ENCODE measurements at regions of chr6 and their contacts with region 1.

Region 1: DNA sequence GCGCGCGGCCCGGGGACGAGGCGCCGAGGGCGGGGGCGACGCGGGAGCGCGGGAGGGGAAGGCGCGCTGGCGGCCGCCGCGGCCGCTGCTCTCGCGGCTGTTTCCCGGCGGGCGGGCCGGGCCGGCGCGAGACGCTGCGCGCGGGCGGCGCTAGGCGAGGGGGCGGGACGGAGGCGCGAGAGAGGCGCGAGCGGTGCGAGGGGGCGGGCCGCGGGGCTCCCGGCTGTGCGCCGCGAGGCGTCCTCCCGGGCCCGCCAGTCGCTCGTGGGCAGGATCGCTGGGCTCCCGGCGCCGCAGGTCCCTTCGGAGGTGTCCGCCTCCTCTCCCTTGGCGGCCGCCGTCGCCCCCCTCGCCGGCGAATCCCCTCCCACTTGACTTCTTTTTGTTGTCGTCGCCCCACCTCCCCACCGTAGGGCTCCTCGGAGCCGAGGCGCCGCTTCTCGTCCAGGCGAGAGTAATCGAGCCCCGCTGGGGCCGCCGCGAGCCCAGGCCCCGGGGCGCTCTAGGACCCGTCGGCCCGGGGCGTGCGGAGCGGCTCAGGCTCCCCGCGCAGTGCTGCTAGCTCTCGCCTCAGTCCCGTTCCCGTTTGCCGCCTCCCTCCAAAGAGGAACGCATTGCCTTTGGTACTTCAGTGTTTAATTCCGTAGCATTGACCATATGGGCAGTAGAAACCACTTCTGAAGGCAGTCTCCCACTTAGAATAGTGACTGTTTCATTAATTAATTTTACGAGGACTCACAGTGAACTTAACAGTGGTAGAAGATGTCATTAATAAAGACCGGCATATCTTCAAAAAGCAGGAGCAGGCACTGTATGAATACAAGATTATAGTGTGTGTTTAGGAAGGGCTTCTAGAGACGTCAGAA is at the start of gene RANBP9:
- DNase-seq: peak; percentile 95
- H3K4me3 ChIP-seq: peak within 1 kb of the TSS; percentile 74
- H3K27ac ChIP-seq: peak within 1 kb of the TSS; percentile 78
- H3K4me1 ChIP-seq: peaks cover 20% of the 10 kb centered on the region
- CTCF ChIP-seq: no peak
- total RNA-seq, gene RANBP9: 20.5 and 22.2 TPM in 2 replicates

Region 2: DNA sequence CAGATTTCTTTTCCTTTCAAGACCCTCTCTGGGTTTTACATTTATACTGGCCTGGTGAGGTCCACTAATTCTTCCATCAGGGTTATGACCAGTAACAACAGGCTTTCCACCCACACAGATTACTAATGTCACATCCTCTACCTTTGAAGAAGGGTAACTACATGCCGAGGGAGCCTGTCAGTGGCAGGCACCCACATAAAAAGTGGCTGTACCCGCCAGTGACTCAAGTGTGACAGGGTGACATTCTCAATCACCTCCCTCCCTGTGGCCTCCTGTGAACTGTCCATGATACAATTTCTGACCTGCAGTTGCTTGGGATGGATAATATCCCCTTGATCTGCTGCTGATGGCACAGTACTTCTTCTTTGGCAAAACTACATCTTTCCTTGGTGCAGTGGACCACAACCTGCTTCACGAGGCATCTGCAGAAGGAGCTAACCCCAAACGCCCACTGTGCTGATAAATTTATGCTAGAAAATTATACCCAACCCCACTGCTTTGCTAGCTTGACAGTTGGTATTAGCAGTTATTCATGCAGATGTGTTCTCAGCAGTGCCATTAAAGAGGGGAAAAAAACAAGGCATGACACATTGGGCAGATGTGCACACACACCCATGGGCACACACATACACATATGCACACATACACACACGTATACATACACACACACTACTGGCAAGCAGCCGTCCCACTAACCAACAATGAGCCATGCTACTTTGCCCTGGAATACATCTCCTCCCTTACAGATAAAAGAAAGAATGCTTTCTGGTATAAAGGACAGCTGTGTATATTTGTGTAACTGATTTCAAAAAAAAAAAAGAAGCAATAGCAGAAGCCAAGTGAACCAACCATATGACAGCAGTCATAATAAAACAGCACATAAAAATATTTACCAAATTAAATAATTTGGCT is 245.4 kb before region 1 on chr6:
- CTCF ChIA-PET with region 1: no interaction called
- POLR2A ChIA-PET with region 1: no interaction called
- intact Hi-C with region 1: loop called (anchors 5 kb)
- DNase-seq: no peak
- H3K4me3 ChIP-seq: peak overlapping the region; percentile 2
- H3K27ac ChIP-seq: no peak overlapping the region
- H3K4me1 ChIP-seq: peaks cover 79% of the 10 kb centered on the region
- CTCF ChIP-seq: no peak

Region 3: DNA sequence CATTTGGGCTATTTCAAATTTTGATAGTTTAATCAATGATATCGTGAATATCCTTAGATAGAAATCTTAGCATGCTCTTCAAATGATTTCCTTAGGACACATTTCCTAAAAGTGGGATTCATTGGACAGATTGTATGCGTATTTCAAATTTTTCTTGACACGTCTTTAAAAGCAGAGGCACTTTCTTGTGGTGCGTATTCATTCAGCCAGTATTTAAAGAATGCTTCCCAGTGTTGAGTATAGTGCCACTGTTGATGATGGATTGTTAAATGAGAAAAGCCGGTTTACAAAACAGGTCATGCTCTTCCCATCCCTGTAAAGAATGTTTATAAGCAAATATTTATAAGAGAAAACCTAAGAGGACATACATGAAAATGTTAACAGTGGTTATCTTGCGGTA is 111.9 kb before region 1 on chr6:
- CTCF ChIA-PET with region 1: no interaction called
- POLR2A ChIA-PET with region 1: no interaction called
- intact Hi-C with region 1: no loop called
- DNase-seq: no peak
- H3K4me3 ChIP-seq: no peak overlapping the region
- H3K27ac ChIP-seq: no peak overlapping the region
- H3K4me1 ChIP-seq: no peaks in the 10 kb centered on the region
- CTCF ChIP-seq: no peak

Region 4: DNA sequence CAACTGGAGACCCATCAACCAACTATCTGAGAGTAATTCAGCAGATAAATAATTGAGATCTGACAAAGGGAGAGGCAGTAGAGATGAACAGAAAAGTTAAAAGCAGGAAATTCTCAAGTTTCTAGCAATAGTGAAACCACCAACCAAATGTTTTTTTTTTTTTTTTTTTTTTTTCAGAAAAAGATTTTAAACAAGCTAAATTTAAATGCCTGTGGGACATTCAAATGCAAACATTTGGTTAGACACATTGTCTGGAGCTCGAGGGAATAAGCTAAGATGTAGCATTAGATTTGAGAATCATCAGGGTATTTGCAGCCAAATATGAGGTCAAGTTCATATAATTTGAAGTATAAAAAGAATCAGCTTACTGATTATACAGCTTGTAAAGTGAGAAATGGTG is 16.7 kb before region 1 on chr6:
- CTCF ChIA-PET with region 1: no interaction called
- POLR2A ChIA-PET with region 1: interaction called, 12 read pairs
- intact Hi-C with region 1: no loop called
- DNase-seq: no peak
- H3K4me3 ChIP-seq: no peak overlapping the region
- H3K27ac ChIP-seq: no peak overlapping the region
- H3K4me1 ChIP-seq: peaks cover 9% of the 10 kb centered on the region
- CTCF ChIP-seq: no peak

Region 5: DNA sequence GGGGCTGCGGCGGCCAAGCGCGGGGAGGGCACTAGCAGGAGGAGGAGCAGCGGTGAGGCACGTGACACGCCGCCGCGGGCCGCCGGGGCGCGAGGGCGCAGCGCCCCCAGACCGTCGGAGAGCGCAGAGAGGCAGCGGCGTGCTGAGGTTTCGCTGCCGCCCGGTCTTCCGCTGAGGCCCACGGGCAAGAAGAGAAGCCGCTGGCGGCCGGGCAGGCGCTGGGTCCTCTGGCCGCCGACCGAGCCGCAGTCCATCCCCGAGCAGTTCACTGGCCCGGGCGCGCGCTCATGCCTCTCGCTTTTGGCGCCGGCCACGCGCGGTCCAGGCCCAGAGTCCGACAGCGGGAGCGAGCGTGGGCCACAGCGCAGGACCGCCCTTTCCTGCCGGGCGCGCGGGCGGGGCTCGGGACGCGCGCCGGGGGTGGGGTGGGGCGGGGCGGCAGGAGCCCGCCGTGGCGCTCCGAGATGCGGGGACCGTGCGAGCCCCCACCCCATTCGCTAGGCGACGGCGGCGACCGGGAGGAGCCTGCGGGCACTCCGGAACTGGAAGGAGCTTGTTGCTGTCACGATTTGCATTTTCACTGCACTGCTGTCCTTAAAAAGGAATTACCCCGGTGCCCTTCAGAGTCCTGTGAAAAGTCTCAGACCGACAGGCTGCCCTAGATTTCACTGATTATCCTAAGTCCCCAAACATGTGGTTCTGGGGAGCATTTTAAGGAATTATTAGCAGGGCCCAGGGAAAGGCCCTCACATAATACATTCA is 102.4 kb after region 1 on chr6 and contains the start of gene MCUR1:
- CTCF ChIA-PET with region 1: no interaction called
- POLR2A ChIA-PET with region 1: interaction called, 8 read pairs
- intact Hi-C with region 1: loop called (anchors 1 kb)
- DNase-seq: peak; percentile 94
- H3K4me3 ChIP-seq: peak within 1 kb of the TSS; percentile 86
- H3K27ac ChIP-seq: peak within 1 kb of the TSS; percentile 87
- H3K4me1 ChIP-seq: peaks cover 30% of the 10 kb centered on the region
- CTCF ChIP-seq: peak; percentile 38; the same call in 1 of the 2 replicates
- total RNA-seq, gene MCUR1: 11.9 and 17.3 TPM in 2 replicates

Region 6: DNA sequence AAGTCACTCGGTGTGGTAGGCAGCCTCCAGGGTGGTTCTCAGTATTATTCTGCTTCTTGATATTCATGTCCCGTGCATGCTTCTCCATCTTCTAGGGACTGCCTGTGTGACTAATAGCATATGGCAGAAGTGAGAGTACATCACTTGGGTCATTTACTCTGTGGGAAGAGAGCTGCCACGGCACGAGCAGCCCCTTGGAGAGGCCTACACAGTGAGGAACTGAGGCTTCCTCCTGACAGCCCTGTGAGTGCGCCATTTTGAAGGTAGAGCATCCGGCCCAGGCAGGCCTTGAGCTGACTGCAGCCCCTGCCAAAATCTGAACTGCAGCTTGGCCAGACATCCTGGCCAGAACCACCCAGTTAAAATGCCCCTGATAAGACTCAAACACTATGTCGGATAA is 119.6 kb after region 1 on chr6:
- CTCF ChIA-PET with region 1: no interaction called
- POLR2A ChIA-PET with region 1: no interaction called
- intact Hi-C with region 1: no loop called
- DNase-seq: no peak
- H3K4me3 ChIP-seq: no peak overlapping the region
- H3K27ac ChIP-seq: no peak overlapping the region
- H3K4me1 ChIP-seq: no peaks in the 10 kb centered on the region
- CTCF ChIP-seq: no peak

Measured in OCI-LY7 (cell line).